ENCODE measurements at regions of chr4 and their contacts with region 1.

Region 1: GRCh38 chr4:117134386-117134785 is 49.0 kb upstream of the TRAM1L1 start:
- DNase-seq: peak; percentile 69
- ATAC-seq: peak; percentile 74
- H3K4me3 ChIP-seq: peak overlapping the region; percentile 47
- H3K27ac ChIP-seq: no peak overlapping the region
- H3K4me1 ChIP-seq: peaks cover 10% of the 10 kb centered on the region; the same call in 1 of the 2 replicates
- H3K27me3 ChIP-seq: no peaks in the 10 kb centered on the region
- CTCF ChIP-seq: peak; percentile 79

Region 2: DNA sequence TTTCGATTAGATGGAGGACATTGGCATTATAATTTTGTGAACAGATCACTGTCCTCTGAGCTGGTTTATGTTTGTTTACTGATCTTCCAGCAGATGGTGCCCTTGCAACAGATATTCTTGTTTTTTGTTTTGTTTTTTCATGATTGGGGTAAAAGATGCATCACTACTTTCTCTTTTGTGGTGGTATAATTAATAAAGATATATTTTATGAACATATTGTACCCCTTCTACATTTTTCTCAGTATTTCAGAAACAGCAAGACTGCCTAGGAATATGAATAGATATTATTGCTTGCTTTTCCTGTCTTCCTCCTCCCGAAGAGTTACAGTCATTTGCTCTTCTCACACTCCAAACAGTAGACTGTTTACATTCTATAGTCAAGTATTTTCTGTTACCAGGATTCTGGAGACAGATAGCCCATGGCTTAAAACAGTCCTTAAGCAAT is 954.2 kb before region 1 on chr4:
- CTCF ChIA-PET with region 1: no interaction called
- POLR2A ChIA-PET with region 1: no interaction called
- intact Hi-C with region 1: loop called (anchors 10 kb)
- DNase-seq: peak; percentile 24
- ATAC-seq: peak; percentile 55
- H3K4me3 ChIP-seq: peak overlapping the region; percentile 46
- H3K27ac ChIP-seq: no peak overlapping the region
- H3K4me1 ChIP-seq: no peaks in the 10 kb centered on the region
- H3K27me3 ChIP-seq: no peaks in the 10 kb centered on the region
- CTCF ChIP-seq: peak; percentile 68

Region 3: GRCh38 chr4:117324851-117325491 is 190.6 kb after region 1 on chr4:
- CTCF ChIA-PET with region 1: no interaction called
- POLR2A ChIA-PET with region 1: no interaction called
- intact Hi-C with region 1: loop called (anchors 5 kb)
- DNase-seq: peak; percentile 93
- ATAC-seq: peak; percentile 90
- H3K4me3 ChIP-seq: peak overlapping the region; percentile 70
- H3K27ac ChIP-seq: peak overlapping the region; percentile 99
- H3K4me1 ChIP-seq: peaks cover 28% of the 10 kb centered on the region
- H3K27me3 ChIP-seq: no peaks in the 10 kb centered on the region
- CTCF ChIP-seq: no peak

Region 4: GRCh38 chr4:117560329-117560728 is 425.9 kb after region 1 on chr4:
- CTCF ChIA-PET with region 1: no interaction called
- POLR2A ChIA-PET with region 1: no interaction called
- intact Hi-C with region 1: loop called (anchors 1 kb)
- DNase-seq: peak; percentile 50
- ATAC-seq: no peak; the same call in none of the 2 replicates
- H3K4me3 ChIP-seq: no peak overlapping the region
- H3K27ac ChIP-seq: no peak overlapping the region
- H3K4me1 ChIP-seq: no peaks in the 10 kb centered on the region
- H3K27me3 ChIP-seq: no peaks in the 10 kb centered on the region
- CTCF ChIP-seq: peak; percentile 52; the same call in 1 of the 2 replicates

Region 5: GRCh38 chr4:117971403-117971802 is 837.0 kb after region 1 on chr4:
- CTCF ChIA-PET with region 1: interaction called, 4 read pairs
- POLR2A ChIA-PET with region 1: no interaction called
- intact Hi-C with region 1: loop called (anchors 1 kb)
- DNase-seq: no peak
- ATAC-seq: no peak
- H3K4me3 ChIP-seq: no peak overlapping the region
- H3K27ac ChIP-seq: no peak overlapping the region
- H3K4me1 ChIP-seq: no peaks in the 10 kb centered on the region
- H3K27me3 ChIP-seq: no peaks in the 10 kb centered on the region
- CTCF ChIP-seq: no peak

Region 6: DNA sequence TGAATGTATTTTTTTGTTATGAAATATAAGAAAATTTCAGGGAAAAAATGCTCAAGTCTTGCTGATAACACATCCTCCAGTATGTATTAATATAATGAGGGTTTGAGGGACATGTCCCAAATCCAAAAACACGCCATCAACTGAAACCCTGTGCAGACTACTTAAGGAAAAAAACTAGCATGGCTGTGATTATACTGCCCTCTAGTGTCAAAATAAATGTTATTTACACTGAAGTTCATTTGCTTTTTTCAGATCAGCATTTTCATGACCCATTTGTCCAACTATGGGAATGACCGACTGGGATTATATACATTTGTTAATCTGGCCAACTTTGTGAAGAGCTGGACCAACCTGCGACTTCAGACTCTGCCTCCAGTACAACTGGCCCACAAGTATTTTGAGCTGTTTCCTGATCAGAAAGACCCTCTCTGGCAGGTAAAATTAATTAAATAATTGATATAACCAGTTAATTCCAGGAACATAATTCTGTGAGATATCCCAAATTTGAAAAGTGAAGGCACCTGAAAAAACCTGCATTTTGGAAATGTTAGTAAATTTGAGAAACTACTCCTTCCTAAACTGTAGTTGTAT is 1089.9 kb after region 1 on chr4:
- CTCF ChIA-PET with region 1: no interaction called
- POLR2A ChIA-PET with region 1: no interaction called
- intact Hi-C with region 1: loop called (anchors 5 kb)
- DNase-seq: peak; percentile 63
- ATAC-seq: peak; percentile 54
- H3K4me3 ChIP-seq: no peak overlapping the region
- H3K27ac ChIP-seq: no peak overlapping the region
- H3K4me1 ChIP-seq: no peaks in the 10 kb centered on the region
- H3K27me3 ChIP-seq: no peaks in the 10 kb centered on the region
- CTCF ChIP-seq: peak; percentile 68

Measured in PC-3 (cell line).